ENCODE measurements at regions of chr13 and their contacts with region 1.

Region 1: DNA sequence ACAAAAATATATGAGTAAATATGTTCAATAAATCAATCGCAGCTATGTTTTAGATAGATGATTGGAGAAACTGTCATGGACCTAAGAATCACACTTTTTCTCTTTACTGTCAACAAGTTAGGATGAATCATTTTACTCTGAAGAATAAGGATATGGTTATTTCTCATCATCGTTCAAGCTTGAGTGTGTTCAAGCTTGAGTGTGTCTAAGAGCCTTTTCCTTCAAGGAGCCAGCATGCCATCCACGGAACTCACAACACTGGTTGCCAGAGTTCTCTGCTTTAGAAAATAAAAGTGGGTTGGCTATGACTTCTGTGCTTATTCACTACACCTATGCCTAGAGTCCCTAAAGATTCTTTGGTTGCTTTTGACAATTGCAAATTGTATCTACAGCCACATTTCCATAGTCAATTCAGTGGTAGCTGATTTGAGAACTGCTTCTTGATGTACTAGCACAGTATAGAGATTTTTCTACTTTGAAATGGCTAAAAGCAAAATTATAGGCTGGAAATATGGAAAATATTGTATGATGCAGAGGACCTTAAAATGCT is 58.1 kb upstream of the SCEL start:
- DNase-seq: no peak
- H3K4me3 ChIP-seq: no peak overlapping the region
- H3K27ac ChIP-seq: peak overlapping the region in 1 of 4 donors; percentile 26
- H3K4me1 ChIP-seq: no peaks in the 10 kb centered on the region
- H3K27me3 ChIP-seq: no peaks in the 10 kb centered on the region
- CTCF ChIP-seq: no peak
- EP300 ChIP-seq: no peak
- POLR2A ChIP-seq: no peak

Region 2: GRCh38 chr13:77274126-77274525 is 203.2 kb before region 1 on chr13:
- intact Hi-C with region 1: loop called (anchors 10 kb)
- DNase-seq: no peak
- H3K4me3 ChIP-seq: no peak overlapping the region
- H3K27ac ChIP-seq: no peak overlapping the region
- H3K4me1 ChIP-seq: no peaks in the 10 kb centered on the region
- H3K27me3 ChIP-seq: no peaks in the 10 kb centered on the region
- CTCF ChIP-seq: no peak
- EP300 ChIP-seq: no peak
- POLR2A ChIP-seq: no peak

Region 3: GRCh38 chr13:77329133-77329910 is 148.1 kb before region 1 on chr13:
- intact Hi-C with region 1: loop called (anchors 5 kb)
- DNase-seq: peak; percentile 88
- H3K4me3 ChIP-seq: peak overlapping the region; percentile 66 to 87 (median 85)
- H3K27ac ChIP-seq: peak overlapping the region; percentile 83 to 93 (median 88)
- H3K4me1 ChIP-seq: peaks cover 3 to 37% (median 29%) of the 10 kb centered on the region in 4 donors
- H3K27me3 ChIP-seq: no peaks in the 10 kb centered on the region
- CTCF ChIP-seq: no peak
- EP300 ChIP-seq: no peak
- POLR2A ChIP-seq: peak in 1 of 2 donors; percentile 38